PC-3 (cell line): ENCODE measurements at regions of chr11 and their contacts with region 1.

Region 1: DNA sequence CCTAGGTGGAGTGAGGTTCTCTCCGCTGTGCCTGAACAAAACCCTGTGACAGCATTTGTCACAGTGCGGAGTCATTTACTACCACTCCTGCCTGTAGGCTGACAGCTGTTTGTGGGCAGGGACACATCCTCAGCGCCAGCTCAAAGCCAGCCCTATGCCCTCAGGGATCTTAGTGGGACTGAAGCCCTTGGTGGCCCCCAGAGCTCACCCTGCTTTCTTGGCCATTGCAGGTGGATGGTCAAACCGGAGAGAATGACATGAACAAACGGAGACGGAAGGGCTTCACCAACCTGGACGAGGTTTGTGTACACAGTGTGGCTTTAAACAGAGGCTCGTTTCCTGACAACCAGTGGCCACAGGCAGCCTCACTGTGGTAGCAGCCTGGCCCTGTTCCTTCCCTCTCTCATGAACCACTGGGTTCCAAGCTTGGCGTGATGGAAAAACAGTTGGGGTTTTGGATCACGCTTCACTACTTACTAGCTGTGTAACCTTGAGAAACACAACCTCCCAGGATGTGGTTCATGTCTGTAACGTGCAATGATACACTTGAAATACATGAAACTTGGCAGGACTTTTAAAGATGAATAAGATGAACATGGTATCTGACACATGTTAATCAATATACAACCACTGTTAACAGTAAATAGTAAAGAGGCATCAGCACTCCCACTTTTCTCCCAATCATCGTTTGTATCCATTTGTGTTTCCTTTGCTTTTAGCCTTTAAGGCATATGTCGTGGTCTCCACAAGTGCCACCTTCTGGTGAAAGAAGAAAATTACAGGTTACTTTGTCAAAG is 125.8 kb downstream of the MICAL2 start:
- DNase-seq: peak; percentile 75
- ATAC-seq: peak; percentile 34
- H3K4me3 ChIP-seq: no peak overlapping the region
- H3K27ac ChIP-seq: peak overlapping the region; percentile 97
- H3K4me1 ChIP-seq: peaks cover 56% of the 10 kb centered on the region
- H3K27me3 ChIP-seq: no peaks in the 10 kb centered on the region
- CTCF ChIP-seq: peak; percentile 77

Region 2: GRCh38 chr11:12056123-12056522 is 180.0 kb before region 1 on chr11:
- CTCF ChIA-PET with region 1: no interaction called
- POLR2A ChIA-PET with region 1: no interaction called
- intact Hi-C with region 1: loop called (anchors 1 kb)
- DNase-seq: no peak
- ATAC-seq: no peak
- H3K4me3 ChIP-seq: no peak overlapping the region
- H3K27ac ChIP-seq: no peak overlapping the region
- H3K4me1 ChIP-seq: no peaks in the 10 kb centered on the region
- H3K27me3 ChIP-seq: no peaks in the 10 kb centered on the region
- CTCF ChIP-seq: peak; percentile 41; the same call in 1 of the 2 replicates

Region 3: DNA sequence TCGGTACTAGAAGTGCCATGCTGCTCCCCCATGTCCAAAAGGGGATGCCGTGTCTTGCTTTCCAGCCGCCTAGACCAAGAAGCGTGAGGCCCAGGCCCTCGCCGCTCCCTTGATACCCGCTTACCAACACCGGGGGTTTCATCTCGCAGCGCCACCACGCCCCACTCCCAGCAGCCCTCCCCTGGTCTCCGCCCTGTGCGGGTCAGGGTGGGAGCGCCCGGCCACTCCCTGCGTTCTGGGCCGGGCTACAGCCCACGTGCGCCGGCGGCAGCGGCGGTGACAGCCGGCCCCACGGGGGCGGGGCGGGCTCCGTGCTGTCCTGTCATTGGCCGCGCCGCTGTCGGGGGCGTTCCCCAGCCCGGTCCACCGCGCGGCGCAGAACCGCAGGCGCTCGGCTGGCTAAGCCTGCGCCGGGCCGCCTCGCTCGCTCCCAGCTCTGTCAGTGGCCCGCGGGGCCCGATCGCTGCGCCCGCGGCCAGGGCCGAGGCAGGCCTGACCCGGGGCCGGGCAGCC is 125.9 kb before region 1 on chr11 and contains the start of gene MICAL2:
- CTCF ChIA-PET with region 1: no interaction called
- POLR2A ChIA-PET with region 1: no interaction called
- intact Hi-C with region 1: loop called (anchors 1 kb)
- DNase-seq: peak; percentile 92
- ATAC-seq: peak; percentile 90
- H3K4me3 ChIP-seq: peak within 1 kb of the TSS; percentile 93
- H3K27ac ChIP-seq: peak within 1 kb of the TSS; percentile 54
- H3K4me1 ChIP-seq: peaks cover 26% of the 10 kb centered on the region
- H3K27me3 ChIP-seq: no peaks in the 10 kb centered on the region
- CTCF ChIP-seq: no peak
- total RNA-seq, gene MICAL2: 50.1 and 62.9 TPM in 2 replicates

Region 4: GRCh38 chr11:12159351-12160099 is 76.6 kb before region 1 on chr11:
- CTCF ChIA-PET with region 1: interaction called, 6 read pairs
- POLR2A ChIA-PET with region 1: interaction called, 3 read pairs
- intact Hi-C with region 1: loop called (anchors 1 kb)
- DNase-seq: peak; percentile 69
- ATAC-seq: peak; percentile 69
- H3K4me3 ChIP-seq: no peak overlapping the region
- H3K27ac ChIP-seq: peak overlapping the region; percentile 48
- H3K4me1 ChIP-seq: peaks cover 43% of the 10 kb centered on the region
- H3K27me3 ChIP-seq: no peaks in the 10 kb centered on the region
- CTCF ChIP-seq: peak; percentile 32; the same call in 1 of the 2 replicates

Region 5: DNA sequence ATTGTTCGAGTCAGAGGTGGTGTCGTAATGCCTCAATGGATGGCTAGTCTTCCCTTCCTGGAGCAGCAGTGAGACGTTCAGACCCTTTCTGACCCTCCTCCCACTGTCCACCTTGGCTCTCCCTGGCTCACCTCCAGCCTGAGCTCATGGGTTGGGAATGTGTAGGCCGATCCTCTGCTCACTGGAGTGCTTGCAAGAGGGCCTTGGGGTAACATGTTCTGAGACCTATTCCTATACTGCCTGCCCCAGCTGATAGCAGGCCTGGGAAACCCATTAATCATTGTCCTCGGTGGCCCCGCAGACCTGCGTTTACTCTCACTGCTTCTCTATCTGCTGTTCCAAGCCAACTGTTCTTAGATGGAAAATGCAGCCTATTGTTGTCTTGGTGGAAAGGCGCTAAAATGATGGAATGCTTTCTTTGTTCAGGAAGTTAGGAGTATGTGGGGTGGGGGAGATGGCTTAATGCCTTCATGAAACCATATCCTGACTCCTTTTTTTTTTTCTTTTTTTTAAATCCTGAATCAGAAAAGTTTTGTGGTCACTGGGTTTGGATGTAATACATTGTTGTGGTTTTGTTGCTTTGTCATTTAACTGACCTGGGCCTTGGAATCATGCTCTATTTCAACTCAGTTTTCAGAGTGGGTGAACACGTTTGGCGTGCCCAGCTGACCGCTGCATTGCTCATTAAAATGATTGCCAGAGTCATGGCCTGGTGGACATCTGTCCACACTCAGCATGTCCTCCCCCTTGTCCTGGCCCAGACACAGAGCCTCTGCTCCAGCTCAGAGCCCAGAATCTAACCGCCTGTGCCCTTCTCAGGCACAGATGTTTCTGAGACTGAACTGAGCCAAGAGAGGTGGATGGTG is 53.2 kb before region 1 on chr11:
- CTCF ChIA-PET with region 1: interaction called, 3 read pairs
- POLR2A ChIA-PET with region 1: no interaction called
- intact Hi-C with region 1: loop called (anchors 2 kb)
- DNase-seq: peak; percentile 94
- ATAC-seq: peak; percentile 82
- H3K4me3 ChIP-seq: peak overlapping the region; percentile 15; the same call in 1 of the 2 replicates
- H3K27ac ChIP-seq: peak overlapping the region; percentile 98
- H3K4me1 ChIP-seq: peaks cover 45% of the 10 kb centered on the region
- H3K27me3 ChIP-seq: no peaks in the 10 kb centered on the region
- CTCF ChIP-seq: no peak

Region 6: DNA sequence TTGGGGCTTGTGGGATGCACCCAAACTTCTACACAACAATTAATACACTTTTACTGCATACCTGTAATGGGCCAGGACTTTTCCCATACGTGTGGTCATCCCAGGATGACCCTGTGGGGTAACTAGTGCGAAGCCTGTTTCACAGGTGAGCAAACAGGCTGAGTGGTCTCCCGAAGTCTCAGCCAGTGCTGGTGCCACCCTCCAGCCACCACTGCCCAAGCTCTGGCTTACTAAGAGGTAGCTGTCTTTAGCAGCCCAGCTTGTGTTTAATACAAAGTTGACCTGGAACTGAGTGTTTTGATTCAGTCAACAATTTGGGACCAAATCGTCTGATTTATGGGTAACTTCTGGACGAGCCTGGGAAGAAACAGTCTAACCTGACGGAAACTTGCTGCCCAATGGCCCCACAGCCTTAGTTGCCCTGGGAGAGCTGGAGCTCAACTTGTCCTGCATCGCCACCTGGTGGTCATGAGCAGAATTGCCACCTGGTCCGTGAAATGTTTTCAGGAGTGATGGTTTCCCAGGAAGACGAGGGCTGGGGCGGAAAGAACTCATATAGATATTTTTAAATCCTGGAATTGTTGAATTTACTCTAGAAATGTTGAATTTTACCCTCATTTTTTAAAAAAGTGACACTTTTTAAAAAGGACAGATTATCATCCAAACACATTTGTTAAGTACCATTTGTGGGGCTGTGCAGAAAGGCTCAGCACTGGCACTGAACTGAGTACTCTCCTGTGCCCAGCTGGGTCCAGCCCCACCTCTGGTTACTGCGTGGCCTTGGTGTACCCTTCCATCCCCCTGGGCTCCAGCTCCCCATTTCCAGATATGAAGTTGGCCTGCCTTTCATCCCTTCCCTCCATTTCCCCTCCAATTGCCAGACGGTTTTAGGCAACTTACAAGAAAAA is 45.7 kb after region 1 on chr11:
- CTCF ChIA-PET with region 1: no interaction called
- POLR2A ChIA-PET with region 1: no interaction called
- intact Hi-C with region 1: loop called (anchors 5 kb)
- DNase-seq: peak; percentile 87
- ATAC-seq: peak; percentile 49
- H3K4me3 ChIP-seq: no peak overlapping the region
- H3K27ac ChIP-seq: 0 out of 2 replicates have a peak overlapping the region, but pooled peaks have one; percentile 5
- H3K4me1 ChIP-seq: peaks cover 53% of the 10 kb centered on the region
- H3K27me3 ChIP-seq: no peaks in the 10 kb centered on the region
- CTCF ChIP-seq: peak; percentile 97

Region 7: GRCh38 chr11:12356944-12357650 is 121.0 kb after region 1 on chr11:
- CTCF ChIA-PET with region 1: no interaction called
- POLR2A ChIA-PET with region 1: no interaction called
- intact Hi-C with region 1: no loop called
- DNase-seq: no peak
- ATAC-seq: no peak
- H3K4me3 ChIP-seq: no peak overlapping the region
- H3K27ac ChIP-seq: no peak overlapping the region
- H3K4me1 ChIP-seq: no peaks in the 10 kb centered on the region
- H3K27me3 ChIP-seq: no peaks in the 10 kb centered on the region
- CTCF ChIP-seq: no peak